Cardiac septum (tissue), 1 donor: ENCODE measurements at regions of chr11 and their contacts with region 1.

Region 1: GRCh38 chr11:93567401-93567895 is 24.3 kb upstream of the SMCO4 start:
- DNase-seq: peak; percentile 81

Region 2: GRCh38 chr11:93329936-93330445 is 237.5 kb before region 1 on chr11:
- intact Hi-C with region 1: loop called (anchors 10 kb)
- DNase-seq: no peak